HAP-1 (cell line): ENCODE measurements at regions of chr9 and their contacts with region 1.

Region 1: GRCh38 chr9:37913480-37914153 is 9.7 kb upstream of the SLC25A51 start:
- DNase-seq: peak; percentile 73 to 91
- H3K4me3 ChIP-seq: no peak overlapping the region
- H3K4me1 ChIP-seq: peaks cover 3% of the 10 kb centered on the region
- H3K27me3 ChIP-seq: no peaks in the 10 kb centered on the region

Region 2: GRCh38 chr9:37683531-37684371 is 229.9 kb before region 1 on chr9:
- in situ Hi-C with region 1: no loop called
- DNase-seq: no peak
- H3K4me3 ChIP-seq: no peak overlapping the region
- H3K4me1 ChIP-seq: no peaks in the 10 kb centered on the region
- H3K27me3 ChIP-seq: peaks cover 6% of the 10 kb centered on the region; the same call in 1 of the 2 replicates

Region 3: DNA sequence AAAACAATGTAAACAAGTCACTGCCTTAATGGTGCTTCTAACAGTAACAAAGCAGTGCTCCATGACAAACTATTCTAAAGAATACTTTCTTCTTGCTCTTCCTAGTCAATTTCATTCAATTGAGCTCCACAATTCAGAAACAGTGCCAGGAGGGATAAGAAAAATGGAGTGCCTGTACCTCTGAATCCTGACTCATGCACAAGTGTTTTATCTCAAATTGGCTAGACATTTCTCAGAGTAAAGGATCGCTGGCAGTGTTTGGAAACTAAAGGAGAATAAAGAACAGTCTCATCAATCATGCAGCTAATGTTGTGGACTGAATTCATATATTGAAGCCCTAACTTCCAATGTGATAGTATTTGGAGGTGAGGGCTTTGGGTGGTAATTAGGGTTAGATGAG is 37.2 kb before region 1 on chr9:
- in situ Hi-C with region 1: no loop called
- DNase-seq: no peak
- H3K4me3 ChIP-seq: no peak overlapping the region
- H3K4me1 ChIP-seq: no peaks in the 10 kb centered on the region
- H3K27me3 ChIP-seq: no peaks in the 10 kb centered on the region

Region 4: DNA sequence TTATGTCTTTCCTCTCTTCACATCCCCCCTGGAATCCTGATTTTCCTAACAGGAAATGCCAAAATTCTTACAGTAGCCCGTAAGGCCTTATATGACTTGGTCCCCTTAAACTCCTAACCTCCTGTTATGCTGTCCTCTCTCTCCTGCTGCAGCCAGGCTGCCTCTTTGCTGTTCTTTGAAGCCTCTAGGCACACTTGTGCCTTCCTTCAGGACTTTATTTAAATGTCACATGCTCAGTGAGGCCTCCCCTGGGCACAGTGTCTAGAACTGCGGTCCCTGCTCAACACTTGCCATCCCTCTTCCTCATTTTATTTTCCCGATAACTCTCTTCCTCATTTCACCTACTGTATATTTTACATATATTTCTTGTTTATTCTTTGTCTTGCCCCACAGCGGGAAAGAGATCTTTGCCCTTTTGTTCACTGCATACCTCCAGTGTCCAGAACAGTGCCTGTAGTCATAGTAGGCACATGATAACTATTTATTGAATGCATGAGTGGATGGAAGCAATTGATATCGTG is 160.9 kb after region 1 on chr9:
- in situ Hi-C with region 1: loop called (anchors 5 kb)
- DNase-seq: no peak
- H3K4me3 ChIP-seq: no peak overlapping the region
- H3K4me1 ChIP-seq: peaks cover 9% of the 10 kb centered on the region
- H3K27me3 ChIP-seq: no peaks in the 10 kb centered on the region

Region 5: GRCh38 chr9:38160613-38161215 is 247.1 kb after region 1 on chr9:
- in situ Hi-C with region 1: loop called (anchors 10 kb)
- DNase-seq: peak; percentile 56 to 91
- H3K4me3 ChIP-seq: no peak overlapping the region
- H3K4me1 ChIP-seq: peaks cover 5% of the 10 kb centered on the region
- H3K27me3 ChIP-seq: no peaks in the 10 kb centered on the region

Region 6: GRCh38 chr9:38233343-38233742 is 319.7 kb after region 1 on chr9:
- in situ Hi-C with region 1: no loop called
- DNase-seq: no peak
- H3K4me3 ChIP-seq: no peak overlapping the region
- H3K4me1 ChIP-seq: peaks cover 4% of the 10 kb centered on the region; the same call in 1 of the 2 replicates
- H3K27me3 ChIP-seq: peaks cover 5% of the 10 kb centered on the region; the same call in 1 of the 2 replicates